ENCODE measurements at regions of chr5 and their contacts with region 1.

Region 1: GRCh38 chr5:152556784-152557183 is 151.7 kb upstream of the NMUR2 start:
- DNase-seq: no peak
- ATAC-seq: no peak
- H3K4me3 ChIP-seq: no peak overlapping the region
- H3K27ac ChIP-seq: no peak overlapping the region
- H3K4me1 ChIP-seq: no peaks in the 10 kb centered on the region
- H3K27me3 ChIP-seq: no peaks in the 10 kb centered on the region
- CTCF ChIP-seq: no peak

Region 2: DNA sequence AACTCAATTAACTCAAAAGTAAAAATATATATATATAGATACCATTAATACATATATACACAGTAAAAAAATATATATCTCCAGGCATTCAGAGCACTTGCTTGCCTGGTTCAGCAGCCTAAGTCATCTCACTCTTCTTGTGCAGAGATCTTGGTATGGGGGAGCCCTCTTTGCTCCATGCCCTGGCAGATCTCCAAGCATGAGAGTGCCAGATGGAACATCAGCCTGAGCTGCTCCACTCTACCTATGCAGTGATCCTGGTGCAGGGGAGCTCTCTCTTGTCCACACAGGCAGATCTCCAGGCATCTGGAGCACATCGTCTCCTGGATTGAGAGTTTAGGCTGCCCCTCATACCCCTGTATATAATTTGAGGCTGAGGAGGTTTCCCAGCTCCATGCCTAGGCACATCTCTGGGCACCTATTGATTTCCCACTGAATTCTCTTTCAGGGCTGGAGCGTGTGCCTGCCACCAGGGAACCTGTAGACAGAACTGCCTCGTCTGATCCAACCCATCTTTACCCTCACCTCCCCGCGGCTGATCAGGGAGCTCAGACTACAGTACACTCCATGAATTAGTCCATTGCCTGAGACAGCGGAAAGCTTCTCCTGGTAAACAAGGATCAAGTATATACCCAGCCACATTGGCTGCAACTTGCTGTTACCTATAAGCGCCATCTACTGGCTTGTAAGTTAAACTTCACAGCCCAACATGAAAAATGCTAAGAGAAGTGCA is 591.3 kb after region 1 on chr5:
- intact Hi-C with region 1: loop called in 1 of 2 experiments (anchors 10 kb)
- DNase-seq: peak in 2 of 4 donors; percentile 3 to 24
- ATAC-seq: peak; percentile 82
- H3K4me3 ChIP-seq: no peak overlapping the region
- H3K27ac ChIP-seq: no peak overlapping the region
- H3K4me1 ChIP-seq: no peaks in the 10 kb centered on the region
- H3K27me3 ChIP-seq: no peaks in the 10 kb centered on the region
- CTCF ChIP-seq: peak; percentile 34 to 42